ENCODE measurements at regions of chr19 and their contacts with region 1.

Region 1: DNA sequence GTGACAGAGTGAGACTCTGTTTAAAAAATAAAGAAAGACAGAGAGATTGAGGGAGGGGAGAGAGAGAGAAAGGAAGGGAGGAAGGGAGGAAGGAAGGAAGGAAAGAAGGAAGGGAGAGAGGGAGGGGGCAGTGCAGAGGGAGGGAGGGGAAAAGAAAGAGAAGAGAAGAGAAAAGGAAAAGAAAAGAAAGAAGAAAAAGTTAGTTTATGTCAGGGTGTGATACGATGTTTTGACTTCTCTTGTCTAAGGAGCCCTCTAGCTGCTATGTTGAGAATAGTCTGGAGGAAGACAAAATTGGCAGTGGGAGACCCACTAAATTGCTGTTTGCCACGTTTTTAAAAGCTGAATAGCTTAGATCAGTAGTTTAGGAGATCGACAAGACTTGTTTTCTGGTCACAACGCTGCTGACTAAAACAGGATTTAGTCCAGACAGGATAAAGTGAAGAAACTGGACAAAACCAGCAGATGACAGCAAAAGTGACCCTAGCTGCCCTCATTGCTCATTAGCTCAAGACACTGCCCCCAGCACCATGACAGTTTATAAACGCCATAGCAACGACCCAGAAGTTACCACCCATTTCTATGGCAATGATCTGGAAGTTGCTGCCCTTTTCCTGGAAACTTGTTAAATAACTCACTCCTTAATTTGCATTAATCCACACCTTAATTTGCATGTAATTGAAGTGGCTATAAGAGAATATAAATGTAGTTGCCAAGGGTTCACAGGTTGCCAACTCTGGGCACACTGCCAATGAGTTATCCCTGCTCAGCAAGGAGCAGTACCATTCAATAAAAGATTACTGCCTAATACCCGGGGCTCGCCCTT is 11.1 kb downstream of the TEX101 start:
- DNase-seq: peak; percentile 60
- H3K4me3 Mint-ChIP-seq: no peak overlapping the region
- H3K27ac Mint-ChIP-seq: peak overlapping the region; percentile 34
- H3K4me1 Mint-ChIP-seq: peaks cover 56% of the 10 kb centered on the region
- H3K27me3 Mint-ChIP-seq: no peaks in the 10 kb centered on the region
- CTCF ChIP-seq: peak; percentile 46

Region 2: GRCh38 chr19:41843371-41843770 is 1582.4 kb before region 1 on chr19:
- CTCF ChIA-PET with region 1: interaction called, 13 read pairs
- intact Hi-C with region 1: no loop called
- DNase-seq: no peak
- H3K4me3 Mint-ChIP-seq: no peak overlapping the region
- H3K27ac Mint-ChIP-seq: no peak overlapping the region
- H3K4me1 Mint-ChIP-seq: peaks cover 6% of the 10 kb centered on the region
- H3K27me3 Mint-ChIP-seq: peaks cover 73% of the 10 kb centered on the region
- CTCF ChIP-seq: no peak

Region 3: GRCh38 chr19:43101950-43102349 is 323.8 kb before region 1 on chr19:
- CTCF ChIA-PET with region 1: no interaction called
- intact Hi-C with region 1: loop called (anchors 10 kb)
- DNase-seq: no peak
- H3K4me3 Mint-ChIP-seq: no peak overlapping the region
- H3K27ac Mint-ChIP-seq: no peak overlapping the region
- H3K4me1 Mint-ChIP-seq: peaks cover 12% of the 10 kb centered on the region
- H3K27me3 Mint-ChIP-seq: peaks cover 16% of the 10 kb centered on the region
- CTCF ChIP-seq: no peak

Region 4: GRCh38 chr19:43207991-43208390 is 217.8 kb before region 1 on chr19:
- CTCF ChIA-PET with region 1: no interaction called
- intact Hi-C with region 1: loop called (anchors 10 kb)
- DNase-seq: no peak
- H3K4me3 Mint-ChIP-seq: no peak overlapping the region
- H3K27ac Mint-ChIP-seq: no peak overlapping the region
- H3K4me1 Mint-ChIP-seq: peaks cover 53% of the 10 kb centered on the region
- H3K27me3 Mint-ChIP-seq: no peaks in the 10 kb centered on the region
- CTCF ChIP-seq: no peak

Region 5: GRCh38 chr19:43265664-43266025 is 160.1 kb before region 1 on chr19:
- CTCF ChIA-PET with region 1: interaction called, 5 read pairs
- intact Hi-C with region 1: loop called (anchors 5 kb)
- DNase-seq: peak; percentile 22
- H3K4me3 Mint-ChIP-seq: peak overlapping the region; percentile 59
- H3K27ac Mint-ChIP-seq: peak overlapping the region; percentile 100
- H3K4me1 Mint-ChIP-seq: peaks cover 77% of the 10 kb centered on the region
- H3K27me3 Mint-ChIP-seq: no peaks in the 10 kb centered on the region
- CTCF ChIP-seq: no peak

Region 6: GRCh38 chr19:43826787-43827754 is 401.3 kb after region 1 on chr19 and contains the start of gene ZNF283:
- CTCF ChIA-PET with region 1: interaction called, 13 read pairs
- intact Hi-C with region 1: no loop called
- DNase-seq: peak; percentile 95
- H3K4me3 Mint-ChIP-seq: peak within 1 kb of the TSS; percentile 92
- H3K27ac Mint-ChIP-seq: peak within 1 kb of the TSS; percentile 70
- H3K4me1 Mint-ChIP-seq: peaks cover 20% of the 10 kb centered on the region
- H3K27me3 Mint-ChIP-seq: no peaks in the 10 kb centered on the region
- CTCF ChIP-seq: no peak
- total RNA-seq, gene ZNF283: 12.9 and 13.9 TPM in 2 replicates

Region 7: DNA sequence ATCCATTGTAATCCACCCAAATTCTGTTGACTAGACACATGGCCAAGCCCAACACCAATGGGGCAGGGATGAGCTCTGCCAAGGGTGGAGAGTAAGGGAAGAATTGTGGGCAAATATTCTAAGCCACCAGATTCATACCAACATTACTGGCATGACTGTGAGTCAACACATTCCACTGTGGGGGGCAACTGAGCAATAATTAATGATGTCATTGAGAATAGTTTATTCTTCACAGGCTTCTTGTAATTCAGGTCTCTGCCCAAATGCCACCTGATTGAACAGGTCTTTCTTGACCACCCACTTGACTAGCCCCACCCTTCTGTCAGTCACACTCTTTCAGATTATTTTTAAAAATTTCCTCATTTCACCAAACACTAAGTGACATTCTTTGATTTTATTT is 429.8 kb after region 1 on chr19:
- CTCF ChIA-PET with region 1: no interaction called
- intact Hi-C with region 1: no loop called
- DNase-seq: no peak
- H3K4me3 Mint-ChIP-seq: no peak overlapping the region
- H3K27ac Mint-ChIP-seq: no peak overlapping the region
- H3K4me1 Mint-ChIP-seq: no peaks in the 10 kb centered on the region
- H3K27me3 Mint-ChIP-seq: no peaks in the 10 kb centered on the region
- CTCF ChIP-seq: no peak